ENCODE measurements at regions of chr5 and their contacts with region 1.

Region 1: DNA sequence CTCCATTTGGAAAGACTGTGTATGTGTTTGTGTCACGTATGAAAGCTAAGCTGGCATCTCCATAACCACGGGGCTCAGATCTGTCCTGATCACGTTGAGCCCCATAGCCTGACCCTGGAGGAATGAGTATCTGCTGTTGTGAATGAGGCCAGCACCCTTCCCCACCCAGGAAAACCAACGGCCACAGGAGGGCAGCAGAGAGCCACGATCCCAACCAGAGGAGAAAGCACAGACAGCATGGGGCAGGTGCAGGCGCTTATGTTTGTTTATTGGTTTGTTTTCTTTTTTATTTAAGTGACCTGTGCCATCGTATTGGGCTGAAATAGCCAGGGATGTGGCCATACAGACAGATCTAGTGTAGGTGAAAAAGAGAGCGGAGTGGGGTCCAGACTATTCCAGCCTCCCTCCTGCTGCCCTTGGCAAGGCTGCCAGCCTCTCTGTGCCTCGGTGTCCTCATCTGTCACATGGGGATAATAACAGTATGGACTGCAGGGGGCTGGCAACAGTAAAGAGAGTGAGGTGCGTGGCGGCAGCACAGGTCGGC is 12.0 kb downstream of the OR2V2 start:
- DNase-seq: peak; percentile 66 to 99 (median 88)
- ATAC-seq: peak; percentile 93 to 99 (median 97)
- H3K4me3 ChIP-seq: no peak overlapping the region
- H3K27ac ChIP-seq: no peak overlapping the region
- H3K4me1 ChIP-seq: no peaks in the 10 kb centered on the region
- H3K27me3 ChIP-seq: peaks cover 0 to 1% (median 0%) of the 10 kb centered on the region in 4 donors
- CTCF ChIP-seq: peak; percentile 75 to 86 (median 79)

Region 2: DNA sequence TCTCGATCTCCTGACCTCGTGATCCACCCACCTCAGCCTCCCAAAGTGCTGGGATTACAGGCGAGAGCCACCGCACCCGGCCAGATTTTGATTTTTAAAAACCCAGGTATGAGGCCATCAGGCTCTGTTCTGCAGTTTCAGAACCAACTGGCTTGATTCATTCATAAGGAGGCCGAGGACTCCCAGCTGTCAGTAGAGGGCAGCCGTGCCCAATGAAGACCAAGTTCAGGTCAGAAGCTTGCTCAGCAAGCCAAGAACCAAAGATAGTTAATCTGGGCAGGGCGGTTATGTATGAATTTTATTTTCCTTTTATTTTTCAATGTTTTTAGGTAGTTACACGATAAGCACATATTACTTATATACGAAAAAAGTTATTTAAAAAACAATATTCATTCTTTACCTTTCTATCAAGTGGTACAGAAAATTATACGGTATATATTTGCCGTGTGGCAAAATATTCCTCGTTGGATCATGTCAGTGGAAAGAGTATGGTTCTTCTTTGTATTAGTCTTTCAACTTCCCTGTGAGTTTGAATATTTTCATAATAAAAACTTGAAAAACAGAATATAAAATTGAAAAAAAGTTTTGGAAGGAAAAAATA is 374.8 kb before region 1 on chr5:
- intact Hi-C with region 1: loop called in 1 of 3 experiments (anchors 10 kb)
- DNase-seq: peak in 5 of 6 donors; percentile 76 to 86 (median 80)
- ATAC-seq: peak; percentile 67 to 84 (median 78)
- H3K4me3 ChIP-seq: no peak overlapping the region
- H3K27ac ChIP-seq: peak overlapping the region in 3 of 4 donors; percentile 60 to 87 (median 87)
- H3K4me1 ChIP-seq: peaks cover 15 to 43% (median 37%) of the 10 kb centered on the region in 3 donors
- H3K27me3 ChIP-seq: no peaks in the 10 kb centered on the region
- CTCF ChIP-seq: peak; percentile 24 to 65 (median 61)

Region 3: GRCh38 chr5:180860887-180861822 is 298.2 kb before region 1 on chr5 and contains the start of gene ZFP62:
- intact Hi-C with region 1: loop called in 1 of 3 experiments (anchors 10 kb)
- DNase-seq: peak; percentile 94 to 99 (median 96)
- ATAC-seq: peak; percentile 93 to 97 (median 96)
- H3K4me3 ChIP-seq: peak within 1 kb of the TSS; percentile 80 to 98 (median 95)
- H3K27ac ChIP-seq: peak within 1 kb of the TSS; percentile 88 to 92 (median 90)
- H3K4me1 ChIP-seq: peaks cover 0 to 16% (median 6%) of the 10 kb centered on the region in 3 donors
- H3K27me3 ChIP-seq: no peaks in the 10 kb centered on the region
- CTCF ChIP-seq: no peak
- total RNA-seq, gene ZFP62: 10.4 to 23.9 (median 13.0) TPM

Region 4: DNA sequence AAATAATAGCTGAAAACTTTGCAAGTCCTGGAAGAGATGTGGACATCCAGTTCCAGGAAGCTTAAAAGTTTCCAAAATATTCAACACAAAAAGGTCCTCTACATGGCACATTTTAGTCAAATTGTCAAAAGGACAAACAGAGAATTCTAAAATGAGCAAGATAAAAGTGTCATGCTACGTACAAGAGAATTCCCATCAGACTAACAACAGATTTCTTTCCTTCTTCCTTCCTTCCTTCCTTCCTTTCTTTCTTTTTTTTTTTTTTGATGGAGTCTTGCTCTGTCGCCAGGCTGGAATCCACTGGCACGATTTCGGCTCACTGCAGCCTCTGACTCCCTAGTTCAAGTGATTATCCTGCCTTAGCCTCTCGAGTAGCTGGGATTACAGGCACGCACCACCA is 221.1 kb before region 1 on chr5:
- intact Hi-C with region 1: no loop called
- DNase-seq: no peak
- ATAC-seq: no peak
- H3K4me3 ChIP-seq: no peak overlapping the region
- H3K27ac ChIP-seq: no peak overlapping the region
- H3K4me1 ChIP-seq: no peaks in the 10 kb centered on the region
- H3K27me3 ChIP-seq: no peaks in the 10 kb centered on the region
- CTCF ChIP-seq: no peak